Activated B cell treated with CpG ODN at 0.5 μM for 24 hours (primary cell): ENCODE measurements at regions of chr11 and their contacts with region 1.

Region 1: GRCh38 chr11:33970984-33971466 is 79.1 kb upstream of the LMO2 start:
- DNase-seq: no peak
- ATAC-seq: peak; percentile 87
- H3K4me3 Mint-ChIP-seq: no peak overlapping the region
- H3K27ac Mint-ChIP-seq: no peak overlapping the region
- H3K4me1 Mint-ChIP-seq: peaks cover 5% of the 10 kb centered on the region
- H3K27me3 Mint-ChIP-seq: peaks cover 4% of the 10 kb centered on the region
- CTCF ChIP-seq: no peak

Region 2: GRCh38 chr11:33531743-33532181 is 439.3 kb before region 1 on chr11:
- CTCF ChIA-PET with region 1: no interaction called
- POLR2A ChIA-PET with region 1: no interaction called
- intact Hi-C with region 1: no loop called
- DNase-seq: no peak
- ATAC-seq: no peak
- H3K4me3 Mint-ChIP-seq: no peak overlapping the region
- H3K27ac Mint-ChIP-seq: no peak overlapping the region
- H3K4me1 Mint-ChIP-seq: no peaks in the 10 kb centered on the region
- H3K27me3 Mint-ChIP-seq: peaks cover 24% of the 10 kb centered on the region
- CTCF ChIP-seq: no peak

Region 3: GRCh38 chr11:33835143-33835878 is 135.7 kb before region 1 on chr11:
- CTCF ChIA-PET with region 1: interaction called, 10 read pairs
- POLR2A ChIA-PET with region 1: no interaction called
- intact Hi-C with region 1: no loop called
- DNase-seq: no peak
- ATAC-seq: no peak
- H3K4me3 Mint-ChIP-seq: no peak overlapping the region
- H3K27ac Mint-ChIP-seq: no peak overlapping the region
- H3K4me1 Mint-ChIP-seq: no peaks in the 10 kb centered on the region
- H3K27me3 Mint-ChIP-seq: peaks cover 30% of the 10 kb centered on the region
- CTCF ChIP-seq: no peak

Region 4: DNA sequence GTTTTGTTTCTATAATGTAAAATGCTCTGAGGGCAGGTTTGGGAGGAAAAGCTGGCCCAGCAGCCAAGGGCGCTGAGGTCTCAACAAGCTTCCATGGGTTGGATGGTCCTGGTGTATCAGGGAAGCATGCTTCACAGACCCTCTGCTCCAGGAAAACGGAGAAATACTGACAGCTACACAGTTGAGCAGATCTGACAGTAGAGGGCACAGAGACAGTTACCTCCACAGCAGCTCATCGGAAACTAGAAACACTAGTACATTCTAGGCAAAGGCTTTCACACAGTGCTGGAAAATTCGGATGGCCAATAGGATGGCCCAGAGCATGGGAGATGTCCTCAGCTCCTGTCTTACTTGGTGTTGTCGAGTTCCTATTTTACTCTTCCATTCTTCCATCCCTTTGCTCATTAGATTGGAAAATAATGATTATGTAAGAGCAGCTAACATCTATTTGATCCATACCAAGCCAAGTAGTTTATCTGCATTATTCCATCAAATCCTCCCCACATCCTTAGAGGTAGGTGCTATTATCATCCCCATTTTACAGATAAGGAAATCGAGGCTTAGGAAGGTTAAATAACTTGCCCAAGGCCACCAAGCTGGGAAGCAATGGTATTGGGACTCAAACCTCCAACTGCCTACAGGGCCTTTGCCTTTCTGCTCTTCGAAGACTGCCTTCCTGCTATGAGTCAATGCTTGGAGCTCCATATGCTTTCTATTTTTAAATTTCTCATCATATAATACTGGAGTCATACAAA is 107.4 kb before region 1 on chr11:
- CTCF ChIA-PET with region 1: interaction called, 99 read pairs
- POLR2A ChIA-PET with region 1: interaction called, 5 read pairs
- intact Hi-C with region 1: loop called (anchors 1 kb)
- DNase-seq: no peak
- ATAC-seq: no peak
- H3K4me3 Mint-ChIP-seq: no peak overlapping the region
- H3K27ac Mint-ChIP-seq: no peak overlapping the region
- H3K4me1 Mint-ChIP-seq: peaks cover 22% of the 10 kb centered on the region
- H3K27me3 Mint-ChIP-seq: no peaks in the 10 kb centered on the region
- CTCF ChIP-seq: no peak

Region 5: GRCh38 chr11:33893711-33894397 is 77.2 kb before region 1 on chr11:
- CTCF ChIA-PET with region 1: interaction called, 8 read pairs
- POLR2A ChIA-PET with region 1: interaction called, 3 read pairs
- intact Hi-C with region 1: loop called (anchors 1 kb)
- DNase-seq: peak; percentile 45
- ATAC-seq: peak; percentile 80
- H3K4me3 Mint-ChIP-seq: peak overlapping the region; percentile 92
- H3K27ac Mint-ChIP-seq: peak overlapping the region; percentile 94
- H3K4me1 Mint-ChIP-seq: peaks cover 70% of the 10 kb centered on the region
- H3K27me3 Mint-ChIP-seq: no peaks in the 10 kb centered on the region
- CTCF ChIP-seq: no peak

Region 6: GRCh38 chr11:33987975-33988580 is 17.1 kb after region 1 on chr11:
- CTCF ChIA-PET with region 1: interaction called, 24 read pairs
- POLR2A ChIA-PET with region 1: no interaction called
- intact Hi-C with region 1: loop called (anchors 1 kb)
- DNase-seq: peak; percentile 29
- ATAC-seq: peak; percentile 92
- H3K4me3 Mint-ChIP-seq: no peak overlapping the region
- H3K27ac Mint-ChIP-seq: no peak overlapping the region
- H3K4me1 Mint-ChIP-seq: peaks cover 3% of the 10 kb centered on the region
- H3K27me3 Mint-ChIP-seq: peaks cover 7% of the 10 kb centered on the region
- CTCF ChIP-seq: no peak

Region 7: GRCh38 chr11:34028425-34028824 is 57.4 kb after region 1 on chr11:
- CTCF ChIA-PET with region 1: no interaction called
- POLR2A ChIA-PET with region 1: no interaction called
- intact Hi-C with region 1: no loop called
- DNase-seq: no peak
- ATAC-seq: no peak
- H3K4me3 Mint-ChIP-seq: no peak overlapping the region
- H3K27ac Mint-ChIP-seq: no peak overlapping the region
- H3K4me1 Mint-ChIP-seq: no peaks in the 10 kb centered on the region
- H3K27me3 Mint-ChIP-seq: no peaks in the 10 kb centered on the region
- CTCF ChIP-seq: no peak